ENCODE measurements at regions of chr17 and their contacts with region 1.

Region 1: DNA sequence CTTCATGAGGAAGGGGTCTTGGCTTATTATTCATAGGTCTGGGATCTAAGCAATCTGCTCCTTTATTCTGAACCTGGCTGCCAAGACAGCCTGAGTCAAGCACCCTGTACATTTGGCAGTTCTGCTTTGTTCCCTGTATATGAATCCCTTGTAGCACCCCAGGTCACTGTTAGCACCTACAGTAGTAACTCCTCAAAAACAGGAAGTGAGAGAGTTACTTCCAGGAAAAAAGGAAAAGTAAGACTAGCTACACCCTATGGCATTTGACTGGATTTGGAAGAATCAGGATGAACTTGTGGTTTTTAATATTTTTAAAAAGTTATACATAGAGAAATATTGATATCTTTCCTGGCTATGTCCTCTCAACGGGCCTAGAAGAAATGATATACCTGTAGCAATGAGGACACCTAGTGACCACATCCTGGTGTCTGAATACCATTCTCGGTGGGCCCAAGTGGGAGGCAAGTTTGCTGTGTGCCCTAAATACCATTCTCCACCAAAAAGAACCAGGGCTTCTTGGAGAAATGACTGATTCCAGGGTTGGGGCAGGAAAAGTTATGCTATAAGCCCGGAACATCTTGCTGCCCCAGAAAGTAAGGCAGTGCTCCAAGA is 9.9 kb downstream of the ANKRD40 start:
- DNase-seq: no peak
- ATAC-seq: no peak
- H3K4me3 ChIP-seq: no peak overlapping the region
- H3K27ac ChIP-seq: no peak overlapping the region
- H3K4me1 ChIP-seq: peaks cover 13% of the 10 kb centered on the region
- H3K27me3 ChIP-seq: no peaks in the 10 kb centered on the region
- CTCF ChIP-seq: no peak; a peak in 1 of 6 replicates
- EP300 ChIP-seq: no peak
- POLR2A ChIP-seq: no peak
- RAD21 ChIP-seq: no peak

Region 2: DNA sequence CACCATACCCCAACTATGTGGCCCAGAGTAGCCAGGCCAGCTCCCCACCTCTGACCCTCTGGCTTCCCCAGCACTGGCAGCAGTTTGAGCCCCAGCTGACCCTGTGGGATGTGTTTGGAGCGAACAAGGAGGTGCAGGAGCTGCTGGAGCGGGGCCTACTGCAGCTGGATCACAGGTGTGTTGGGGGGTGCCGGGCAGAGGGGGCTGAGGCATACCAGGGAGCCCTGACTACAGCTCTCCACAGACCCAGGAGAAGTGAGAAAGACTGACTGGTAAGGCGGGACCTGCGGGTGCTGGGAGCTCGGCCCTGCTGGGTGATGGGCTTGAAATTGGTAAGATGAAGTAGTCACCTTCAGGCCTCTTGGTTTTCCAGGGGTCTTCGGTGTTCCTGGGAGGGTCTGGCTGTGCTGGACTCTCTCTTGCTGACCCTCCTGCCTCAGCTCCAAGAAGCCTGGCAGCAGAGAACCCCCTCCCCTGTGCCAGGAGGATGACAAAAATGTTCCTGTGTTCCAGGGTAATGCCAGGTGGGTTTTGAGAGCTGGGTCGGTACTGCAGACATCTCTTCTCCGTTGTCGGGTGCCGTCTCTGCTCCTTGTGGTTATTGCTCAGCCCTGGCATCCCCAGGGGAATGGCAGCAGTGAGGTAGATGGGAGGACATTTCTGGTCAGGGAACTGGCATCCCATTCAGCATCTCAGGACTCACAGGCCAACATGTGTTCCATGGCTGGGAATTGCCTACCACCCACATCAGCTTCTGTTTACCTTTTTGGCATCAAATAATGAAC is 213.2 kb before region 1 on chr17:
- CTCF ChIA-PET with region 1: interaction called, 10 read pairs
- POLR2A ChIA-PET with region 1: no interaction called
- RAD21 ChIA-PET with region 1: interaction called, 5 read pairs
- SMC1A ChIA-PET with region 1: interaction called, 10 read pairs
- in situ Hi-C with region 1: no loop called
- intact Hi-C with region 1: loop called (anchors 1 kb)
- DNase-seq: no peak
- ATAC-seq: no peak
- H3K4me3 ChIP-seq: no peak overlapping the region
- H3K27ac ChIP-seq: no peak overlapping the region
- H3K4me1 ChIP-seq: no peaks in the 10 kb centered on the region
- H3K27me3 ChIP-seq: no peaks in the 10 kb centered on the region
- CTCF ChIP-seq: no peak
- EP300 ChIP-seq: no peak
- POLR2A ChIP-seq: no peak
- RAD21 ChIP-seq: no peak

Region 3: DNA sequence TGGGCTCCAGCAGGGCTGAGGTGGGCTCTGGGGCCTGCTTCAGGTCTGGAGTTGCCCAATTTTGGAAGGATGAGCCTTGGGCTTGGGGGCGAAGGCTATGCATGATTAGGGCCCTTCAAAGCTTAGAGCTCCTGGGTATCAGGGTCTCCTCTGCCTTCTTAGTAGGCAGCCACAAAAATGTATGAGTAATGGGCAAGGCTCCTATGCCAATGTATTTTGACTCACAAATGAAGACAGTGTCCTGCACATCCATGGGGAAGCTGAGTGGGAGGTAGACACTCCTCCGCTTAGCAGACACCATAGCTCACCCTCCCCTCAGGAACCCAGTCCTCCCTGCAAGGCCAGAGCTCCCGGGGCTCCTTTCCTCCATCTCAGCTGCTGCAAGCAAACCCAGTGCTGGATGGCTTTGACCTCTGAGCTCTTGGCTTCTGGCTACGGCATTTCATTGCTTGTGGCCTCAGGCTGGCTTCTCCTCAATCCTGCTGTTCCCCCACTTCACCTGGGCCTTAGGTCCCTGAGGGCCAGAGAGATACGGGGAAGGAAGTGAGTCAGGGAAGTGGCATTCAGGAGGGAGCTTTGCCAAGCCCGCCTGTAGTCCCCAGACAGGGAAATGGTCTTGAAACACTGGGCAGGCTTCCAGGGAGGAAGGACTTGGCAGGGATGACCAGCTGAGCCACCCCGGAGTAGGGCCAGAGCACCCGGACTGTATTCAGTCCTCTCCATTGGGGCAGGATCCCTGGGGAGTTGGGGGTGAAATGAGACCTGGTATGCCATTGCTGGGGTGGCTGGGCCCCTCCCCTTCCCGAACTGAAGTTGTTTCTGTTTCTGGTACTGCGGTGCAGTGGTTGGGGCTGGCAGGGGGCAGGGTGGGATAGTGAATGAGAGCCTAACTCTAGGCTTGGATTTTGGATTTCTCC is 58.7 kb before region 1 on chr17:
- CTCF ChIA-PET with region 1: interaction called, 211 read pairs
- POLR2A ChIA-PET with region 1: no interaction called
- RAD21 ChIA-PET with region 1: interaction called, 3 read pairs
- SMC1A ChIA-PET with region 1: interaction called, 17 read pairs
- in situ Hi-C with region 1: no loop called
- intact Hi-C with region 1: no loop called
- DNase-seq: no peak
- ATAC-seq: peak; percentile 9; the same call in 1 of the 3 replicates
- H3K4me3 ChIP-seq: no peak overlapping the region
- H3K27ac ChIP-seq: no peak overlapping the region
- H3K4me1 ChIP-seq: peaks cover 4% of the 10 kb centered on the region; the same call in 1 of the 2 replicates
- H3K27me3 ChIP-seq: no peaks in the 10 kb centered on the region; a peak in 2 of 4 replicates
- CTCF ChIP-seq: no peak
- EP300 ChIP-seq: no peak
- POLR2A ChIP-seq: no peak
- RAD21 ChIP-seq: no peak